HAP-1 (cell line): ENCODE measurements at regions of chr18 and their contacts with region 1.

Region 1: GRCh38 chr18:69484699-69485396 is 84.2 kb downstream of the DOK6 start:
- DNase-seq: peak; percentile 22 to 23
- H3K4me3 ChIP-seq: no peak overlapping the region
- H3K4me1 ChIP-seq: no peaks in the 10 kb centered on the region
- H3K27me3 ChIP-seq: no peaks in the 10 kb centered on the region; the same call in 1 of the 2 replicates

Region 2: DNA sequence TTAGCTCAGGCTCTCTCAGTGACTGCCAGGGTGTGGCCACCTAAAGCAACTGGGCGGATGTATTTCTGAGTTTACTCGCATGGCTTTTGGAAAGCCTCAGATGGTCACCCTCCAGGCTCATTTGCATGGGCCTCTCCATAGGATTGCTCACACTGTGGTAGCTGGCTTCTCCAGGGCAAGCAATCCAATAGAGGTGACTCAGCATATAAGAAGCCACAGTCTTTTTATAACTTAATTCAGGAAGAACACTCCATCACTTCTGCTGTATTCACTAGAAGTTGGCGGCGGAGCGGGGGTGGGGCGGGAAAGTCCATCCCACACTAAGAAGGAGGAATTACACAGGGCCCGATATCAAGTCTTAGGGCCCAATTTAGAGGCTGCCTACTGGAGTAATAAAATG is 87.8 kb before region 1 on chr18:
- in situ Hi-C with region 1: loop called (anchors 25 kb)
- DNase-seq: no peak
- H3K4me3 ChIP-seq: no peak overlapping the region
- H3K4me1 ChIP-seq: no peaks in the 10 kb centered on the region
- H3K27me3 ChIP-seq: no peaks in the 10 kb centered on the region

Region 3: GRCh38 chr18:70072678-70073077 is 587.8 kb after region 1 on chr18:
- in situ Hi-C with region 1: no loop called
- DNase-seq: no peak
- H3K4me3 ChIP-seq: no peak overlapping the region
- H3K4me1 ChIP-seq: no peaks in the 10 kb centered on the region
- H3K27me3 ChIP-seq: no peaks in the 10 kb centered on the region